Mucosa of descending colon (tissue), 3 donors: ENCODE measurements at regions of chr20 and their contacts with region 1.

Region 1: GRCh38 chr20:36439040-36439730 is 102.1 kb upstream of the MYL9 start:
- DNase-seq: peak in 2 of 3 donors; percentile 75 to 80
- ATAC-seq: peak; percentile 64
- H3K4me3 ChIP-seq: no peak overlapping the region
- H3K4me1 ChIP-seq: no peaks in the 10 kb centered on the region
- CTCF ChIP-seq: peak; percentile 84

Region 2: DNA sequence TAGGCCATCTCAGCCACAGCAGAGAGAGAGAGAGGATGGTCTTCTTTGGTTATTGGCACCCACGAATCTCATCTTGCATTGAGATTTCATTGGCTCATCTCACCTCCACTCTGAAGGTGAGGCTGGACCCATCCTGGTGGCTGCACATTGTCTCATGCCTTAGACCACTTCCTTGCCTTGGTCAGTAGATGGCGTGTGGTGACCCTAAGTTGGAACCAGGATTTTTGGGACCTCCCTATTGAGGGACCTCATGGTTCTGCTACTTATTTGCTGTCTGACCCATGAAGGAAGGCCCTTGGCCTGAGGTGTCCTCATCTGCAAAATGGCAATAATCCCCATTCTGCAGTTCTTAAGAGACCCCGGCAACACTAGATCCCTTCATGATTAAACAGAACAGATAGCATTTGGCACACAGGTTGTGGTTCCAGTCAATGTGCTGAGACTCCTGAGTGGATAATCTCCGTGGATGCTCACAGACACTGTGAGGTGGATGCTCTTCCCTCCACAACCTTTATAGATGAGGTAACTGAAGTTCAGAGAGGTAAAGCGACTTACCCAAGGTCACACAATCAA is 224.4 kb before region 1 on chr20:
- intact Hi-C with region 1: loop called in 1 of 2 experiments (anchors 10 kb)
- DNase-seq: no peak
- ATAC-seq: peak; percentile 33
- H3K4me3 ChIP-seq: no peak overlapping the region
- H3K4me1 ChIP-seq: no peaks in the 10 kb centered on the region
- CTCF ChIP-seq: no peak